Mammary epithelial cell (primary cell): ENCODE measurements at regions of chr13 and their contacts with region 1.

Region 1: DNA sequence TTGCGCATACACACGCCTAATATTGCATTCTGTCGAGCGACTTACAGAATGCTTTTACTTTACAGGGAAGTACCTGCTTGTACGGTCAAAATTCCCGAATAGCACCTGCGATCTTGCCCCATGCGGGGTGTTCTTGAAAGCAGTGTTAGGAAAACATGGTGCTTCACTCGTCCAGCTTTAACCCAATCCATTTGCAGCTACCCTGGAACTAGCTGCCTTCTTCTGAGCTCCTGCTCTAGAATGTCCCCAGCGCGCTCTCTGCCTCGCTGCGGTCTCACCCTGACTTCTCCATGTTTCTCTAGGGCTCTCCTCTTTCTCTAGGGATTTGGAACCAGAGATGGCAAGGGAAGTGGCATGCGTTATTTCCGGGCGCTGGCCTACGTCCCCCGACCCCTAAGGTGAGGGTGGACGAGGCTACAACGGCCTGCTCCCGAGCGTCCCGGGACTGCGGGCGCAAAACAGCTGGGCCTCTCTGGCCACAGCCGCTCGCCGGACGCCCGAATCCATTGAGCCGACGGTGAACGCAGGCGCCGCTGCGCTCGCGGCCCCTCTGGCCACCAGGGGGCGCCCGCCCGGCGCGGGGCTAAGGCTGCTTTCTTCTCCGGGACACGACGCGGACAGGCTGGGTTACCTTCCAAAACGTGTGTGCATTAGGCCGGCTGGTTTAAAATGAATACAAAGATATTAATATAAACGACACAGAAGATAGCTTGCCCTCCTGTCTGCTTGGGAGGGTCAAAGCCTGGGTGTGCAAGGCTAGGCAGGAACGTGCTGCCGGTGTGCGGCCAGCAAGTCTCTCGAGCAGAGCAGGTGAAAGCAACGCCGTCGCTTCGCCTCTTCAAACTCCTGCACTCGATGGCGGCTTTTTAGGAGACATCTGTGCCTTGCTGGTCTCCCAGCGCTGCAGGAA is 1.8 kb upstream of the SPRY2 start:
- DNase-seq: peak; percentile 75
- H3K4me3 ChIP-seq: peak overlapping the region; percentile 45 to 90 (median 59)
- H3K27ac ChIP-seq: no peak overlapping the region
- H3K4me1 ChIP-seq: peaks cover 12% of the 10 kb centered on the region
- H3K27me3 ChIP-seq: no peaks in the 10 kb centered on the region
- CTCF ChIP-seq: peak; percentile 90 to 95

Region 2: GRCh38 chr13:79631051-79631659 is 711.6 kb before region 1 on chr13:
- CTCF ChIA-PET with region 1: no interaction called
- dilution Hi-C with region 1: no loop called
- in situ Hi-C with region 1: no loop called
- intact Hi-C with region 1: loop called (anchors 1 kb)
- DNase-seq: peak; percentile 97
- H3K4me3 ChIP-seq: no peak overlapping the region
- H3K27ac ChIP-seq: peak overlapping the region; percentile 62
- H3K4me1 ChIP-seq: peaks cover 36% of the 10 kb centered on the region
- H3K27me3 ChIP-seq: no peaks in the 10 kb centered on the region
- CTCF ChIP-seq: peak; percentile 40 to 66

Region 3: GRCh38 chr13:79782541-79783205 is 560.1 kb before region 1 on chr13:
- CTCF ChIA-PET with region 1: no interaction called
- dilution Hi-C with region 1: no loop called
- in situ Hi-C with region 1: loop called (anchors 10 kb)
- intact Hi-C with region 1: loop called (anchors 1 kb)
- DNase-seq: peak; percentile 85
- H3K4me3 ChIP-seq: no peak overlapping the region
- H3K27ac ChIP-seq: peak overlapping the region; percentile 49
- H3K4me1 ChIP-seq: peaks cover 30% of the 10 kb centered on the region
- H3K27me3 ChIP-seq: no peaks in the 10 kb centered on the region
- CTCF ChIP-seq: no peak

Region 4: DNA sequence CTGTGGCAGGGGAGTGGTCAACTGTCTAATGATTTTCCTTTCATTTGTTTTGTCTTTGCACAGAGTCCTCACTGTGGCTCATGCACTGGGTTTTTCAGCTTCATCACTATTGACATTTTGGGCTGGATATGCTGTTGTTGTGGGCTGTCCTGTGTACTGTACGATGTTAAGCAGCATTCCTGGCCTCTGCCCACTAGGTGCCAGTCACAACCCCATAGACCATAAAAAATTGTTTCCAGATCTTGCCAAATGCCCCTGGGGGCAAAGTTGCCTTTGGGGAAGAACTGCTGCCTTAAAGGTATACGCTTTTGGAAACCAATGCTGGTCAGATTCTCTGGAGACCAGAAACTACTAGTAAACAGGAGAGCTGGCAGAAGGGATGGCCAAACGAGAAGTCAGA is 312.2 kb before region 1 on chr13:
- CTCF ChIA-PET with region 1: no interaction called
- dilution Hi-C with region 1: no loop called
- in situ Hi-C with region 1: loop called in 1 of 2 experiments (anchors 25 kb)
- intact Hi-C with region 1: loop called (anchors 1 kb)
- DNase-seq: peak; percentile 65
- H3K4me3 ChIP-seq: no peak overlapping the region
- H3K27ac ChIP-seq: no peak overlapping the region
- H3K4me1 ChIP-seq: peaks cover 7% of the 10 kb centered on the region
- H3K27me3 ChIP-seq: no peaks in the 10 kb centered on the region
- CTCF ChIP-seq: peak; percentile 47 to 50

Region 5: GRCh38 chr13:80284290-80284689 is 58.4 kb before region 1 on chr13:
- CTCF ChIA-PET with region 1: no interaction called
- dilution Hi-C with region 1: no loop called
- in situ Hi-C with region 1: no loop called
- intact Hi-C with region 1: no loop called
- DNase-seq: no peak
- H3K4me3 ChIP-seq: no peak overlapping the region
- H3K27ac ChIP-seq: no peak overlapping the region
- H3K4me1 ChIP-seq: no peaks in the 10 kb centered on the region
- H3K27me3 ChIP-seq: no peaks in the 10 kb centered on the region
- CTCF ChIP-seq: no peak

Region 6: DNA sequence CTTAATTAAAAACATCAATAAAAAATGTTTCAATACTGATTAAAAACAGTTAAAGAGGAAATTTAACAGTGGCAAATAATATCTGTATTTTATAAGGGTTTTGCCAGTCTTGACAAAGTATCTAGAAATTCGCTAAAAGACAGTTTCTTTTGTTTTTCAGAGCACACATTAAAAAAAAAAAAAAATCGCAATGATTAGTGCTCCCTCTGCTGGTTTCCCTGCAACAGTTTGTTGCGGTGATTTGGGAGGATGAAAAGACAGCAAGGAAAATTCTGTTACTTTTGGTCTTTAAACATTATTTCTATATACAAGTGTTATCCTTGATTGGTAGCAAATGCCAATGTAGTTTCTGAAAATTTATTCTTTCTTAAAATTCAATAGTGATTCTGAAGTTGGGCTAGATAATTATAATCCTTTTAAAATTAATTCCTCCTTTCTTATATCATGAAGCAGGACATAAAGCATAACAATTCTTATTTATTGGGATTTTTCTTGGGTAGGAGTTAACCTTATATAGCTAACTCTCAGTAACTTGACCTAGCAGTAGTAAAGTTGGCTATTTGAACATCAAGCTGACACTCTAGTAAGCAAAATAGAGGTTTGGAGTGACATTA is 21.3 kb after region 1 on chr13:
- CTCF ChIA-PET with region 1: no interaction called
- dilution Hi-C with region 1: no loop called
- in situ Hi-C with region 1: no loop called
- intact Hi-C with region 1: loop called (anchors 1 kb)
- DNase-seq: peak; percentile 5
- H3K4me3 ChIP-seq: peak overlapping the region in 1 of 3 experiments; percentile 41
- H3K27ac ChIP-seq: peak overlapping the region; percentile 27
- H3K4me1 ChIP-seq: peaks cover 10% of the 10 kb centered on the region
- H3K27me3 ChIP-seq: no peaks in the 10 kb centered on the region
- CTCF ChIP-seq: peak; percentile 69 to 81

Region 7: GRCh38 chr13:81017513-81018152 is 674.9 kb after region 1 on chr13:
- CTCF ChIA-PET with region 1: no interaction called
- dilution Hi-C with region 1: no loop called
- in situ Hi-C with region 1: no loop called
- intact Hi-C with region 1: loop called (anchors 1 kb)
- DNase-seq: peak; percentile 12
- H3K4me3 ChIP-seq: no peak overlapping the region
- H3K27ac ChIP-seq: no peak overlapping the region
- H3K4me1 ChIP-seq: peaks cover 7% of the 10 kb centered on the region
- H3K27me3 ChIP-seq: no peaks in the 10 kb centered on the region
- CTCF ChIP-seq: peak; percentile 41 to 59